Thyroid gland (tissue), 4 donors: ENCODE measurements at regions of chr2 and their contacts with region 1.

Region 1: GRCh38 chr2:26846328-26847306 is 1.3 kb upstream of the DPYSL5 start:
- DNase-seq: peak; percentile 56 to 59
- H3K4me3 ChIP-seq: no peak overlapping the region
- H3K27ac ChIP-seq: no peak overlapping the region
- H3K4me1 ChIP-seq: peaks cover 29 to 38% of the 10 kb centered on the region in 2 donors
- H3K27me3 ChIP-seq: peaks cover 59% of the 10 kb centered on the region
- CTCF ChIP-seq: peak; percentile 48 to 81 (median 58)
- POLR2A ChIP-seq: no peak

Region 2: DNA sequence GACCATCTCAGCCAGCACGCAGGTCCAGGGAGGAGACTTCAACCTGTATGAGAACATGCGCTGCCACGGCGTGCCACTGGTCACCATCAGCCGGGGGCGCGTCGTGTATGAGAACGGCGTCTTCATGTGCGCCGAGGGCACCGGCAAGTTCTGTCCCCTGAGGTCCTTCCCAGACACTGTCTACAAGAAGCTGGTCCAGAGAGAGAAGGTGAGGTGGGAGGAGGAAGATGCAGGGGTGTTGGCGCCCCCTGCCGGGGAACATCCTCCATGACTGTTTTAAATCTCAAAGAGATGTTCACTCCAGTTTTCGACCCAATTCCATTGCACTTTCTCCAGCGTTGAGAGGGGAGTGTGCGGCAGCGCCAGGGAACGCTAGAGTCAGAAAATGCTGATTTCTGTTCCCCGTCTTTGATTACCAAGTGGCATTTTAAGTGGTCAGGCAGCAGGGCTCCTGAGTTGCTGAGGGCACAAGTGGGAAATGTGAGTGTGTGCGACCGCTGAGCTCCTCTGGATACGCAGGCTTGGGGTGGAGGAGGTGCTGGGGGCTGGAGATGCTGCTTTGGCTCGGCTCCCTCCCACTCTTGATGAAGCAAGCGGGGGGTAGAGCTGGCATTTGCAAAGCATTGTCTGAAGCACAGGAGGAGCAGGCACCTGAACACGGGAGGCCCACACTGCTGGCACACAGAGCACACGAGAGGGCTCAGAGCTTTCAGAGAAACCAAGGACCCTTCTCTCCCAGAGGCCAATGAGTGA is 96.1 kb after region 1 on chr2:
- intact Hi-C with region 1: loop called (anchors 5 kb)
- DNase-seq: peak; percentile 67 to 71
- H3K4me3 ChIP-seq: no peak overlapping the region
- H3K27ac ChIP-seq: no peak overlapping the region
- H3K4me1 ChIP-seq: peaks cover 7 to 21% of the 10 kb centered on the region in 2 donors
- H3K27me3 ChIP-seq: no peaks in the 10 kb centered on the region
- CTCF ChIP-seq: peak; percentile 36 to 78 (median 62)
- POLR2A ChIP-seq: no peak